Activated B cell treated with CpG ODN at 0.5 μM for 24 hours (primary cell): ENCODE measurements at regions of chr3 and their contacts with region 1.

Region 1: DNA sequence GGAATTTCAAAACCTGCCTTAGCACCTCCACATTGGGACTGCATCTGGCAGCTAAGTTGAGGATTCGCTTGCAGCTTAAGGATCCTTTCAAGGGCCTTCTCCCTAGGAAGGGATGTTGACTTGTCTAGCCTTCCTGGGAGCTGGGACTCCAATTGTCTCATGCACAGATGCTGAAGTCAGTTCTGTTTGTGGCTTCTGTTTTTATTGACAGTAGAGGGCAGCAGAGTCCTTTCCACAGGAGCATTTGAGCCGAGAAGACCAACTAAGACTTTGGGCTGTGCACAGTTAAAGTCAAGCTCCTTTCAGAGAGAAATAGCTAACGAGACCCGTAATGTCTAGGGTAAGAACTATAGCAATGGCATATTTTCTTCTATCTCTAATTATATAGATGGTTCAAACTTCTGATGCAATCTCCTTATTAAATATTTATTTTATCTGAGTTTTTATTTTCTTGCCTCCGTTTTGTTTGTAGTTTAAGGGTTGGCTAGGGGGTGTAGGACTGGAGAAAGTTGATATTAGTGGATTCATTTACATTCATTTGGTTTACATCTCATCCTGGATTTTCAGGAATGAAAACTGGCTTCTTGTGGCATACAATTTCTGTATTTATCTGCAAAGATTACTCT is 59.7 kb upstream of the KBTBD8 start:
- DNase-seq: no peak
- ATAC-seq: peak; percentile 56
- H3K4me3 Mint-ChIP-seq: no peak overlapping the region
- H3K27ac Mint-ChIP-seq: no peak overlapping the region
- H3K4me1 Mint-ChIP-seq: no peaks in the 10 kb centered on the region
- H3K27me3 Mint-ChIP-seq: peaks cover 5% of the 10 kb centered on the region
- CTCF ChIP-seq: peak; percentile 47

Region 2: DNA sequence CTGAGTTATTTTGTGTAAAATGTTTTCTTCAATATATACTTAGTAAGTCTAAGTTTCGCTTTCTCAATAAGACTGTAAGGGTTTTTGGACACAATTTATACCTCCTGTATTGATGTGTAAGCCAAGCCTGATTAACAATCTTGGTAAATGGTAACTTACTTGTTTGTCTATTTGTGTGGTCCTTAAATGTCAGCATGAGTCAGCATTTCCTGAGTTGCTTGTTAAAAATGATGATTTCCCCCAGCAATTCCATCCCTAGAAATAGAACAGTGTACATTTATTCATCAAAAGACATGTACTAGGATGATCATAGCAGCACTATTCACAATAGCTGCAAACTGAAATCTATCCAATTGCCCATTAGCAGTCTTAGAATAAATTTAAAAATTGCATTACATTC is 384.3 kb before region 1 on chr3:
- CTCF ChIA-PET with region 1: no interaction called
- POLR2A ChIA-PET with region 1: no interaction called
- intact Hi-C with region 1: no loop called
- DNase-seq: no peak
- ATAC-seq: no peak
- H3K4me3 Mint-ChIP-seq: no peak overlapping the region
- H3K27ac Mint-ChIP-seq: no peak overlapping the region
- H3K4me1 Mint-ChIP-seq: peaks cover 16% of the 10 kb centered on the region
- H3K27me3 Mint-ChIP-seq: peaks cover 37% of the 10 kb centered on the region
- CTCF ChIP-seq: no peak

Region 3: GRCh38 chr3:67037615-67038014 is 99.2 kb after region 1 on chr3:
- CTCF ChIA-PET with region 1: interaction called, 20 read pairs
- POLR2A ChIA-PET with region 1: no interaction called
- intact Hi-C with region 1: loop called (anchors 1 kb)
- DNase-seq: no peak
- ATAC-seq: peak; percentile 28
- H3K4me3 Mint-ChIP-seq: no peak overlapping the region
- H3K27ac Mint-ChIP-seq: no peak overlapping the region
- H3K4me1 Mint-ChIP-seq: peaks cover 5% of the 10 kb centered on the region
- H3K27me3 Mint-ChIP-seq: no peaks in the 10 kb centered on the region
- CTCF ChIP-seq: no peak

Region 4: GRCh38 chr3:67790043-67790442 is 851.6 kb after region 1 on chr3:
- CTCF ChIA-PET with region 1: interaction called, 3 read pairs
- POLR2A ChIA-PET with region 1: no interaction called
- intact Hi-C with region 1: loop called (anchors 1 kb)
- DNase-seq: no peak
- ATAC-seq: peak; percentile 50
- H3K4me3 Mint-ChIP-seq: no peak overlapping the region
- H3K27ac Mint-ChIP-seq: no peak overlapping the region
- H3K4me1 Mint-ChIP-seq: no peaks in the 10 kb centered on the region
- H3K27me3 Mint-ChIP-seq: peaks cover 11% of the 10 kb centered on the region
- CTCF ChIP-seq: no peak

Region 5: DNA sequence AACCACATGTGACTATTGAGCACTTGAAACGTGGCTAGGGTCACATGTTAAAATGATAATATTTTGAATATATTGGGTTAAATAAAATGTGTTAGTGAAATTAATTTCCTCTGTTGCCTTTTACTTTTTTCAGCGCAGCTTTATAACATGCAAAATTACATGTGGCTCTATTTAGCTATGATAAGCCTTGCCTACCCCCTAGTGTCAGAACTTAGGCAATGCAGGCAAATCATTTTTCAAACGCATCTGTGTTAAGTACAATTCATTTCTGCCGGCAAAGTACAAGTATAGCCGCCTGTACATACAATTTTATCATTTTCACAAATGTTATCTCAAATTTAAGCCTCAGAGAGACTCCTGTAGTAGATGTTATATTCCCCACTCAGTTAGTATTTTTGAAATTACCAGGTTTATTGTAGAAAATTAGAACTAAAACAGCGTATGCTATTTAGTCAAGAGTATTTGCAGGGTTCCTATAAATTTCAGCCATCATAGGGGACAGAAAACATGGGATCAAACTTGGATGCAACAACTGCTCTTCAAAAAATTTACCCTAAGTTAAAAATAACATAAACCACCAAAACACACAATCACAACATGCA is 1937.8 kb after region 1 on chr3:
- CTCF ChIA-PET with region 1: interaction called, 13 read pairs
- POLR2A ChIA-PET with region 1: no interaction called
- intact Hi-C with region 1: loop called (anchors 1 kb)
- DNase-seq: no peak
- ATAC-seq: peak; percentile 69
- H3K4me3 Mint-ChIP-seq: no peak overlapping the region
- H3K27ac Mint-ChIP-seq: no peak overlapping the region
- H3K4me1 Mint-ChIP-seq: no peaks in the 10 kb centered on the region
- H3K27me3 Mint-ChIP-seq: peaks cover 23% of the 10 kb centered on the region
- CTCF ChIP-seq: peak; percentile 32

Region 6: DNA sequence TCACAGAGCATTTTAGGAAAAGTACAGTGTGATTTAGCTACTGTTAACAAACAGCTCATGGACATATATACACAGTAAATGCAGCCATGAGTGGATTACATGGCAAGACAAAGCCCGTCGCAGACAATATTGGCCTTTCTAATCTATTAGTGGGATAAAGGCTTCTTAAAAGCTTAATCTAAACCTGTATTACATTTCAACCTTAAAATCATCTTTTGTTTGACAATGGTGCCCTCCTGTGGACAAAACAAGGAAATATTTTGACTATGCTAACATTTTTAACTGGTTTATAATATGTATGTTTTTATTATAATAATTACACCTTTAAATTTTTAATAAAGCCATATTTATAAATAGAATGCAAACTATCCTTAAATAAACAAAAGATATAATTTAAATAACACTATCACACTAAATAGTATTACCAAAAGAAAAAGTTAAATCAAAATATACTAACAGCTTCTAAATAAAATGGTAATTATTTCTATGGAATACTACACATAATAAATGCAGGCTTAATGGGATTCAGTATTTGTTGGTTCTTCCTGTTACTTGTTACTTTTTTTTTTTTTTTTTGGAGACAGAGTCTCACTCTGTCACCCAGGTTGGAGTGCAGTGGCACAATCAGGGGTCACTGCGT is 1955.3 kb after region 1 on chr3:
- CTCF ChIA-PET with region 1: interaction called, 12 read pairs
- POLR2A ChIA-PET with region 1: no interaction called
- intact Hi-C with region 1: loop called (anchors 1 kb)
- DNase-seq: no peak
- ATAC-seq: no peak
- H3K4me3 Mint-ChIP-seq: no peak overlapping the region
- H3K27ac Mint-ChIP-seq: no peak overlapping the region
- H3K4me1 Mint-ChIP-seq: no peaks in the 10 kb centered on the region
- H3K27me3 Mint-ChIP-seq: peaks cover 5% of the 10 kb centered on the region
- CTCF ChIP-seq: no peak